MCF 10A (cell line): ENCODE measurements at regions of chr11 and their contacts with region 1.

Region 1: GRCh38 chr11:59822989-59823566 is 12.5 kb upstream of the MRPL16 start:
- DNase-seq: peak; percentile 72
- H3K4me3 Mint-ChIP-seq: no peak overlapping the region
- H3K27ac Mint-ChIP-seq: no peak overlapping the region
- H3K4me1 Mint-ChIP-seq: peaks cover 5% of the 10 kb centered on the region
- H3K27me3 Mint-ChIP-seq: no peaks in the 10 kb centered on the region
- CTCF ChIP-seq: peak; percentile 70

Region 2: DNA sequence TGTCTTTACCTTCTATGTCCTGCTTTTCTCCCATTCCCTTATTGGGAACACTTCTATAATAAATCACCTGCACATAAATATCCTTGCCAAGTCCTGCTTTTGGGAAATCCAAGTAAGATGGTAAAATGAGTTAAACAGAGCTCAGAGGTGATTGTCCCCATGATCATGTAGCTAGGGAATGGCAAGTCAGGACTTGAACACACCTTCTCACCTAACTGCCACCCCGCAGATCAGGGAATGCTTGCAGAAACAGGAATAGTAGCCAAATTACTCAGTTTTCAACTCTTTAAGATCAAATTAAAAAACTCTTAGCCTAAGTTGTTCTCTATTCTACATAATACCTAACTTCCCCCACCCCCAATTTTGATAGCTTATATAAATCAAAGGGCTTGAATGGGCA is 71.5 kb after region 1 on chr11:
- CTCF ChIA-PET with region 1: interaction called, 11 read pairs
- POLR2A ChIA-PET with region 1: no interaction called
- intact Hi-C with region 1: no loop called
- DNase-seq: peak; percentile 23
- H3K4me3 Mint-ChIP-seq: no peak overlapping the region
- H3K27ac Mint-ChIP-seq: no peak overlapping the region
- H3K4me1 Mint-ChIP-seq: no peaks in the 10 kb centered on the region
- H3K27me3 Mint-ChIP-seq: no peaks in the 10 kb centered on the region
- CTCF ChIP-seq: no peak

Region 3: DNA sequence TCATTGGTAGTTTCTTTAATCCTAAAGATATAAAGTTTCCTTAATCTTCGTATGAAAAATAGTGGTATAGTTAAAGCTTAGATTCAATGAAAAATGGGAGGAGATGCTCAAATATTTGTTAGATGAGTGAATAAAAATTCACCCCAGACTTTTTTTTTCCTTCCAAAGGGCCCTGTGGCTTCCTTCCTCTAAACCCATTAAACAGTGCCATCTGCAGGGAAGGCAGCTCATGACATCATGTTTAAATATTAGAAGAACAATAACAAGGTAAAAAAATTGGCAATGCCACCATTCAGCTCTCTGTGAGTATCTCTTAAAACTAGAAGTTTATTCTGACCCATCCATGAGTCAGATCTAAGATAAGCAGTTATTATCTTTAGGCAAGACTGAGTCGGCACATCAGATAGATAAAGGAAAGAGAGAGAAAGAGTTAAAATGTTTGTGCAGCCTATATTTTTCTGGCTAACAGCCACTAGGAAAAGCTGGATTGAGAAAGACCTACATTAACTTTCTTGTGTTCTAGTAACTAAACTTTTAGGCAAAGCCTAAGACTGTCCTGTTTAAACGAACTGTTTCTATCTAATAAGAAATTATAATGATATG is 96.0 kb after region 1 on chr11:
- CTCF ChIA-PET with region 1: interaction called, 48 read pairs
- POLR2A ChIA-PET with region 1: interaction called, 12 read pairs
- intact Hi-C with region 1: loop called (anchors 1 kb)
- DNase-seq: peak; percentile 72
- H3K4me3 Mint-ChIP-seq: no peak overlapping the region
- H3K27ac Mint-ChIP-seq: no peak overlapping the region
- H3K4me1 Mint-ChIP-seq: peaks cover 7% of the 10 kb centered on the region
- H3K27me3 Mint-ChIP-seq: no peaks in the 10 kb centered on the region
- CTCF ChIP-seq: peak; percentile 68

Region 4: DNA sequence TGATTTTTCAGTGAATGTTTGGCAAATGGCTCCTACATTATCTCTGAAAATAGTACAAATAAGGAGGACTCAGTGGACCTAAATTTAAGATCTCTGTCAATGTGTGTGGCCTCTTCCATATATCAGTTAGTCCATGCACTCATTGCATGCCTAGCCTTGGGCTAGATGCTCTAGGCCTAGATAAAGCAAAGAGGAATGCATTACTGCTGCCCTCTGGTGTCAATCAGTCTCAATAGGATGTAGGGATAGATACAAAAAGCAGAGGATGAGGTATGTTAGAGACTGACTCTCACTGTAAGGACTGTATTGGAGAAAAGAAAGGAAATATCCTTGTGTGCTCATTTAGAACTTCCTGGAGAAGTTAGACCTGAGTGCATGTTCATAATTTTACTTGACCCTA is 307.4 kb after region 1 on chr11:
- CTCF ChIA-PET with region 1: interaction called, 4 read pairs
- POLR2A ChIA-PET with region 1: no interaction called
- intact Hi-C with region 1: loop called (anchors 1 kb)
- DNase-seq: peak; percentile 40
- H3K4me3 Mint-ChIP-seq: no peak overlapping the region
- H3K27ac Mint-ChIP-seq: no peak overlapping the region
- H3K4me1 Mint-ChIP-seq: no peaks in the 10 kb centered on the region
- H3K27me3 Mint-ChIP-seq: no peaks in the 10 kb centered on the region
- CTCF ChIP-seq: peak; percentile 41

Region 5: GRCh38 chr11:60169264-60169915 is 346.3 kb after region 1 on chr11:
- CTCF ChIA-PET with region 1: no interaction called
- POLR2A ChIA-PET with region 1: no interaction called
- intact Hi-C with region 1: loop called (anchors 1 kb)
- DNase-seq: peak; percentile 98
- H3K4me3 Mint-ChIP-seq: no peak overlapping the region
- H3K27ac Mint-ChIP-seq: peak overlapping the region; percentile 80
- H3K4me1 Mint-ChIP-seq: peaks cover 22% of the 10 kb centered on the region
- H3K27me3 Mint-ChIP-seq: no peaks in the 10 kb centered on the region
- CTCF ChIP-seq: peak; percentile 76

Region 6: GRCh38 chr11:60193687-60194433 is 370.8 kb after region 1 on chr11:
- CTCF ChIA-PET with region 1: interaction called, 5 read pairs
- POLR2A ChIA-PET with region 1: no interaction called
- intact Hi-C with region 1: loop called (anchors 1 kb)
- DNase-seq: peak; percentile 82
- H3K4me3 Mint-ChIP-seq: no peak overlapping the region
- H3K27ac Mint-ChIP-seq: no peak overlapping the region
- H3K4me1 Mint-ChIP-seq: peaks cover 6% of the 10 kb centered on the region
- H3K27me3 Mint-ChIP-seq: peaks cover 11% of the 10 kb centered on the region
- CTCF ChIP-seq: peak; percentile 85

Region 7: DNA sequence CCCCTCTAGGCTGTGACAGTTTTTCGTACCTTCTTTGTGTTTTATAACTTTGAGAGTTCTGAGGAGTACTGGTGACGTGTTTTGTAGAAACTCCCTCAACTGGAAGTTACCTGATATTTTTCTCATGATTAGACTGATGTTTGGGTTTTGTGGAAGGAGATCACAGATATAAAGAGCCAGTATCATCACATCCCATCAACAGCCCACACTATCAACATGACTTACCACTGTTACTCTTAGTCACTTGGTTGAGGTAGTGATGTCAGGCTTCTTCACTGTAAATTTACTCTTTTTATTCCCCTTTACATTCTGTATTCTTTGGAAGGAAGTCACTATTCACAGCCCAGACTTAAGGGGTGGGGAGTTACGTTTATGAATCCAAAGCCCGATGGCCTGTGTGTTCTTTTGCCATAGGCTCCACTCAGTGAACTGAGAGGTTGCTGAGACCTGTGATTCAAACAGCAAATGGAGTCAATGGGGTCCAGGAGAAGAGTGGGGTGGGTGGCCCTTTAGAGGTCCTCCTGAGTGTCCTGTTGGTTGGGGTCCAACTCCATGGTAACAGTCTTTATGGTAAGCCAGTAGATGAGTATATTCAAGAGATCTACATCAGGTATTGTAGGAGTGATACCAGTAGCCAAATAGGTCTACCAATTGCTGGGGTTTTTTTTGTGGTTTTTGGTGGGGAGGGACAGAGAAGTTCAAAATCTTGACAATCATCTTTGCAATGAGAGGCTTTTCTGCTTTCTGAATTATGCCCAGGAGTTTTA is 435.1 kb after region 1 on chr11:
- CTCF ChIA-PET with region 1: no interaction called
- POLR2A ChIA-PET with region 1: no interaction called
- intact Hi-C with region 1: loop called (anchors 2 kb)
- DNase-seq: no peak
- H3K4me3 Mint-ChIP-seq: no peak overlapping the region
- H3K27ac Mint-ChIP-seq: no peak overlapping the region
- H3K4me1 Mint-ChIP-seq: no peaks in the 10 kb centered on the region
- H3K27me3 Mint-ChIP-seq: no peaks in the 10 kb centered on the region
- CTCF ChIP-seq: no peak